Naive thymus-derived CD4-positive, alpha-beta T cell (primary cell): ENCODE measurements at regions of chr17 and their contacts with region 1.

Region 1: DNA sequence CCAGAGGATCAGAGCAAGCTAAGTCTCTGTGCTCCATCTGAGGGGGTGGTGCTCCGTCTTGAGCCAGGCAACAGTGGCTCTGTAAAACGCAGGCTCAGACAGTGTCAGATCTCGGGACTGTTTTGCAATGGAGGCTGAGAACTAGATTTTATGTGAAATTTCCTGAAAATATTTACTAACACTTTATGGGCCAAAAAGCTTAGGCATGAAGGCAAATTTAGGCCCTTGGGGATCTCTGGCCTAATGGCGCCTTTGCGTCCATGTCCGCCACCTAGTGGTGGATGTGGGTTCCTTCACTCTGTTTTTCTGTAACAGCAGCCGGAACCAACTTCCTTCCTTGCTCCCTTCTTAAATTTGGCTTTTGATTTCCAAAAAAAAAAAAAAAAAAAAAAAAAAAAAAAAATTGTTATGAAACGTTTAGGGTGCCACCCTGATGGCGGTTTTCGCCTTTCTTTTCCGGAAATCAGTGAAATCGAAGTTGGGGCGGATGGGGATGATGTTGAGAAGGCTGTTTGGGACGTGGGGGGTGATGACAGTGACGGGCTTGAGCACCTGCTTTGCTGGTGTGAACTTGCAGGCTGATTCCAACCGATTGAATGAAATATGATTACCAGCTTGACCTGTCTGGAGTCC is 14.0 kb upstream of the ELAC2 start:
- DNase-seq: peak in 8 of 9 donors; percentile 34 to 63 (median 54)
- ATAC-seq: peak; percentile 77
- H3K4me3 ChIP-seq: no peak overlapping the region
- H3K4me3 Mint-ChIP-seq: peak overlapping the region in 8 of 10 donors; percentile 18 to 71 (median 42)
- H3K27ac ChIP-seq: no peak overlapping the region
- H3K27ac Mint-ChIP-seq: peak overlapping the region in 8 of 9 donors; percentile 41 to 90 (median 76)
- H3K4me1 ChIP-seq: peaks cover 0 to 12% of the 10 kb centered on the region in 2 donors
- H3K4me1 Mint-ChIP-seq: peaks cover 6 to 29% (median 16%) of the 10 kb centered on the region in 7 donors
- H3K27me3 ChIP-seq: peaks cover 0 to 2% of the 10 kb centered on the region in 2 donors
- H3K27me3 Mint-ChIP-seq: peaks cover 0 to 16% (median 6%) of the 10 kb centered on the region in 5 donors

Region 2: DNA sequence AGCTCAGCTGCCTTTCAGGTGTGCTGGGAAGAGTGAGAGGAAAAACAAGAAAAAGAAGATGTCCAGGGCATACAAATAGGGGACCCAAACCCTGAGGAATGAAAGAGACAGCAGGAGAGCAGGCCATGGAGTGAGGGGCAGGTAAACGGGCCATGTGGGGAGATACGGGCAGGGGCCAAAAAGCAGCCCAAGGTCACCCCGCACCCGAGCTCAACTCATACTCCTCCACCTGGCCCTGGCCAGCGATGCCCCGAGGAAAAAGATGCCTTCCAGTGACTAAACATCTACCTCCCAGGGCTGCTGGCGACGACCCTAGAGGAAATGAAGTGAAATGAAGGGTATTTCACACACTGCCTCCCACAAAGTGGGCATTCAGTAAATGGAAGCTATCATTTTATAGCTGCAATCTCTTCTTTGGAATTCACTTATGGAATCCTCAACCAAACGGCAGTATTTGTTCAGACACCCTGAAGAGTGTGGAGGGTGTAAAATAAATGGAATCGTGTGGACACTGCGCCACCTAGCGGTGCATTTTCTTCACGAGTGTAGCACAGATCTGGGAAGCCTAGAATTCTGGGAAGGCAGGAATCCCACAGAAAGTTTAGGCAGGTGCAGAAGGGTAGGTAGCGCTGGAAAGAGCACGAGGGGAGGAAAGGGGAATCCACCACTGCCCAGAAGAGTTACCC is 28.9 kb before region 1 on chr17:
- CTCF ChIA-PET with region 1: interaction called, 20 read pairs
- POLR2A ChIA-PET with region 1: no interaction called
- intact Hi-C with region 1: no loop called
- DNase-seq: peak in 6 of 9 donors; percentile 9 to 32 (median 22)
- ATAC-seq: peak; percentile 64
- H3K4me3 ChIP-seq: no peak overlapping the region
- H3K4me3 Mint-ChIP-seq: no peak overlapping the region
- H3K27ac ChIP-seq: no peak overlapping the region
- H3K27ac Mint-ChIP-seq: no peak overlapping the region
- H3K4me1 ChIP-seq: no peaks in the 10 kb centered on the region
- H3K4me1 Mint-ChIP-seq: peaks cover 0 to 11% (median 5%) of the 10 kb centered on the region in 7 donors
- H3K27me3 ChIP-seq: no peaks in the 10 kb centered on the region
- H3K27me3 Mint-ChIP-seq: no peaks in the 10 kb centered on the region

Region 3: GRCh38 chr17:13017659-13018459 is 14.0 kb before region 1 on chr17 and contains the start of gene ELAC2:
- CTCF ChIA-PET with region 1: interaction called, 77 read pairs
- POLR2A ChIA-PET with region 1: interaction called, 40 read pairs
- intact Hi-C with region 1: loop called in 1 of 2 experiments (anchors 1 kb)
- DNase-seq: peak; percentile 86 to 98 (median 95)
- ATAC-seq: peak; percentile 100
- H3K4me3 ChIP-seq: peak within 1 kb of the TSS; percentile 77
- H3K4me3 Mint-ChIP-seq: peak within 1 kb of the TSS; percentile 90 to 99 (median 96)
- H3K27ac ChIP-seq: peak within 1 kb of the TSS; percentile 78
- H3K27ac Mint-ChIP-seq: peak within 1 kb of the TSS; percentile 85 to 99 (median 97)
- H3K4me1 ChIP-seq: peaks cover 6 to 16% of the 10 kb centered on the region in 2 donors
- H3K4me1 Mint-ChIP-seq: peaks cover 18 to 48% (median 35%) of the 10 kb centered on the region in 7 donors
- H3K27me3 ChIP-seq: no peaks in the 10 kb centered on the region
- H3K27me3 Mint-ChIP-seq: no peaks in the 10 kb centered on the region
- total RNA-seq, gene ELAC2: 65.2 to 78.9 (median 75.3) TPM

Region 4: GRCh38 chr17:13337864-13338371 is 306.1 kb after region 1 on chr17:
- CTCF ChIA-PET with region 1: interaction called, 7 read pairs
- POLR2A ChIA-PET with region 1: no interaction called
- intact Hi-C with region 1: loop called in 1 of 2 experiments (anchors 5 kb)
- DNase-seq: peak in 5 of 9 donors; percentile 4 to 22 (median 16)
- ATAC-seq: no peak
- H3K4me3 ChIP-seq: no peak overlapping the region
- H3K4me3 Mint-ChIP-seq: peak overlapping the region in 7 of 10 donors; percentile 28 to 63 (median 51)
- H3K27ac ChIP-seq: no peak overlapping the region
- H3K27ac Mint-ChIP-seq: no peak overlapping the region
- H3K4me1 ChIP-seq: no peaks in the 10 kb centered on the region
- H3K4me1 Mint-ChIP-seq: peaks cover 0 to 7% (median 3%) of the 10 kb centered on the region in 7 donors
- H3K27me3 ChIP-seq: peaks cover 0 to 5% of the 10 kb centered on the region in 2 donors
- H3K27me3 Mint-ChIP-seq: peaks cover 9 to 54% (median 30%) of the 10 kb centered on the region in 5 donors